PC-9 (cell line): ENCODE measurements at regions of chr7 and their contacts with region 1.

Region 1: DNA sequence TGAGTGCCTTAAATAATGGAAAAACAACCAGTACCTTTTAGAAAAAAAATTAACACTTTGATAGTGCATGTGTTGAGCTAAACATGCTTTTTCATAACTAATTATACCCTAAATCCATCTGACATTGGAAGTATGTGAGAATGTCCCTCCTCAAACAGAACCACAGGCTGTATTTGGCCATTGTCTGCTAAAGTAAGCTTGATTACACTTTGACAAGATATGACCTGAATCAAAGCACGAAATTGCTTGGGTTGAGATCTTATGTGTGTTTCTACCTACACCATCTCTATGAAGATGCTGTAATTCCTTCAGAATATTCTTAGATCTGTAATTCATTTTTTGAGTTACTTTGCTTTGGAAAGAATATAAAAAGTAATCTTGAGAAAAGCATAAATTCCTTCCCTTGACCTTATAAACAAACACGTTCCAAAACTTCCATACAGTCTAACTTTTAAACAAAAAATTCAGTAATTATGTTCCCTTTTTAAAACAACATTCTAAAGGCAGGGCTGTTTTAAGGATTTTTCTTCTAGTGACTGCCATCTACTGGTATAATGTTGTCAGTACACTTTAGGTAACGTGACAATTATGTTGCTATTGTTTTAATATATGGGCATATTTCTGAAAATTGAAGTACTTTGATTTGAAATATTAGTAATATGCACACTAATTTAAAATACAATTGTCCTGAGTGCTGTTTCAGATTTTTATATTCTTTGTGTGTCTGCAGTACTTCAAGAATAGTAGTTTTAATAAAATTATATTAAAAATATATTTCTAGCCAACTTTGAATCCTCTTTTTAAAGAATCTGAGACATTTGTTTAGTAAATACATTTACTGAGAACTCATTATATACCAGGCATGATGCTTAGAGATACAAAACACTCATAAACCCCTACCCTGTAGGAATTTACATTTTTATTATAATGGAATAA is 20.9 kb downstream of the CD36 start:
- DNase-seq: no peak
- H3K4me3 ChIP-seq: no peak overlapping the region
- H3K27ac ChIP-seq: no peak overlapping the region
- H3K4me1 ChIP-seq: no peaks in the 10 kb centered on the region
- H3K27me3 ChIP-seq: no peaks in the 10 kb centered on the region
- CTCF ChIP-seq: peak; percentile 96

Region 2: GRCh38 chr7:80453699-80454340 is 205.6 kb before region 1 on chr7:
- CTCF ChIA-PET with region 1: no interaction called
- POLR2A ChIA-PET with region 1: no interaction called
- intact Hi-C with region 1: loop called (anchors 10 kb)
- DNase-seq: no peak
- H3K4me3 ChIP-seq: no peak overlapping the region
- H3K27ac ChIP-seq: no peak overlapping the region
- H3K4me1 ChIP-seq: no peaks in the 10 kb centered on the region; the same call in 1 of the 2 replicates
- H3K27me3 ChIP-seq: no peaks in the 10 kb centered on the region
- CTCF ChIP-seq: peak; percentile 73

Region 3: DNA sequence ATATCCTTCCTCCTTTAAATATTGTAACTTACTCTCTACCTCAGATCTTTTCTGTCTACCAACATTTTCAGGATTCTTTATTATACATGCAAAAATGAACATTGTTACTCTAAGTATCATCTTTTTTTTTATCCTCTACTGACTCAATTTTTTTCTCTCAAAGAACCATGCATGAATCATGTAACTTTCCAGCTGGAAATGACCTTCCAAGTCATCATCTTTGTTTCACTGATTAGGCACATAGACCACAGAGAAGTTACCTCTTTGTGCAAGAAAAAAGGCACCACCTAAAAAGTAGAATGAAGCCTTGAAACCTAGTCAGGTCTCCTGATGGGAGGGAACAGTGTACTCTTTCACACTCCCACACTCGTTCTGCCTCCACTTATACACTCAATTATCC is 875.6 kb after region 1 on chr7:
- CTCF ChIA-PET with region 1: no interaction called
- POLR2A ChIA-PET with region 1: no interaction called
- intact Hi-C with region 1: no loop called
- DNase-seq: no peak
- H3K4me3 ChIP-seq: no peak overlapping the region
- H3K27ac ChIP-seq: no peak overlapping the region
- H3K4me1 ChIP-seq: no peaks in the 10 kb centered on the region
- H3K27me3 ChIP-seq: no peaks in the 10 kb centered on the region
- CTCF ChIP-seq: no peak